Activated T-helper 2 cell treated with anti-CD3 and anti-CD28 coated beads, Interferon-gamma antibody, Interleukin-2, Interleukin-4, amounts not matched to agents 10 μg/mL and 5 μg/mL and 100 μg/mL, durations not matched to agents 14 hours and 24 hours and 36 hours (primary cell): ENCODE measurements at regions of chr6 and their contacts with region 1.

Region 1: DNA sequence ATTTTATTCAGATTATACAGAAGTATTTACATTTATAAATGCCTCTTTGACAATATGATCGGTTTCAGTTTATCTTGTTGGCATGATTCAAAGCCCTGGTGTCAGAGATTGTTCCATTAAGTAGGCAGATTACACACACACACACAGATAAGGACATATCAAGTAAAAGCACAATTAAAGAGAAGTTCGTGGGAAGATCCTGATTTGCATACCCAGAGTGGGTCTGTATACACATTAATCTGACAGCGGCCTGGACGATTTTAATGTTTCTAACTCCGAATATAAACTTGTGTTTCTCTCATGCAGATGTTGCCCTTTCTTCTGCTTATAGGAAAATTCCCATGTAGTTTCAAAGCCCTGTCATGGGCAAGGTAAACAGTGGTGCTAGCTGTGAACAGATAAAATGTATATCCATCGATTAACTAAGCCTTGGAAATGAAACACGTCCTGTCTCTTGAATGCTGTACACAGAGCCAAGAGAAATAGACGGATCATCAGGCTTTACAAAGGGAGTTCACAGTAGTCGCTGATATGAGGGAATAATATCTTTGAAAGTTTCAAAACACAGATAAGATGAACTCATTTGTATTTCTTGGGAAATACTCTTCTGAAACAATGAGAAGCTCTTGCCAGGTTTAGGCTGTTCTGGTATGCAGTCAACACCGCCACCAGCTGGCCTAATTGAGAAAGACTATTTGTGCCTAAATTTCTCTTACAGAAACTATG is 108.2 kb upstream of the GMDS start:
- DNase-seq: peak; percentile 29
- H3K4me3 Mint-ChIP-seq: no peak overlapping the region
- H3K27ac Mint-ChIP-seq: no peak overlapping the region
- H3K4me1 Mint-ChIP-seq: no peaks in the 10 kb centered on the region
- H3K27me3 Mint-ChIP-seq: peaks cover 1% of the 10 kb centered on the region

Region 2: GRCh38 chr6:1596088-1596852 is 757.3 kb before region 1 on chr6:
- intact Hi-C with region 1: loop called (anchors 2 kb)
- DNase-seq: peak; percentile 42
- H3K4me3 Mint-ChIP-seq: no peak overlapping the region
- H3K27ac Mint-ChIP-seq: no peak overlapping the region
- H3K4me1 Mint-ChIP-seq: no peaks in the 10 kb centered on the region
- H3K27me3 Mint-ChIP-seq: peaks cover 55% of the 10 kb centered on the region

Region 3: GRCh38 chr6:1604158-1605030 is 749.2 kb before region 1 on chr6:
- intact Hi-C with region 1: loop called (anchors 1 kb)
- DNase-seq: peak; percentile 40
- H3K4me3 Mint-ChIP-seq: no peak overlapping the region
- H3K27ac Mint-ChIP-seq: no peak overlapping the region
- H3K4me1 Mint-ChIP-seq: peaks cover 10% of the 10 kb centered on the region
- H3K27me3 Mint-ChIP-seq: peaks cover 82% of the 10 kb centered on the region

Region 4: DNA sequence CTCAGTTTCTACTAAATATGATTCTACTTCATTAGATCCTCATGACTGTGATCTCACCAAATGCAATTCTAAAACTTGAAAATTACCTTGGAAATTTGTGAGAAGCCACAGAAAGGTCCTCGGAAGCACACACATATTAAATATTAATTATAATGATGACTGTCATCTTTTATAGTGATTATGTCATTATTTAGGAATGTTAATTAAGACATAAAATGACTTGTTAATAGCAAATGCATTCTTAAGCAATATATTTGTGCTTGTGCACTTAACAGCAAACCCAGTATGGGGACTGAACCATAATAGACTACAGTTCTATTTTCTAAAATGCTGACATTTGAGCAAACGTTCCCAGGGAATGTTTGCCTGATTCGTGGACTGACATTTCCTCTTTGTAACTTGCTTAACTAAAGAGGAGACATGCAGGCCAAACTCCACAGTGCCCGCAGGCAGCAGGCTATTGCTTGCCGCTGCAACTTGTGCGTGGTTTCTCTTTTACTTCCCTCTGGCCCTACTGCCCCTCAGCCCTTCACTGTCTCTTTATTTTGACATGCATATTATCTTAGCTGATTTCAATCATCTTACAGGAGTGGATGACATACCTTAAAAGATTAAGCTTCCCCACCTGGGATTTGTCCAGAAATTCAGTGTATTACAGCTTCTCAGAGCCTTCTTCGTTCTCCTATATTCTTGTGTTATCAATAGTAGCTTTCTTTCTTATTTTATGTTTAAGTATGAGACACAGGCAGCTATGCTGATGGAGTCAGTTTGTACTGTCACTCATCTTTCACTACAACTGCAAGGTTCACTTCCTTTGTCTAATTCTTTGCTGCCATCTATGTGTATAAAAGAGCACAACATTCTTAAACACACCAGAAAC is 249.7 kb before region 1 on chr6:
- intact Hi-C with region 1: loop called (anchors 10 kb)
- DNase-seq: no peak
- H3K4me3 Mint-ChIP-seq: no peak overlapping the region
- H3K27ac Mint-ChIP-seq: no peak overlapping the region
- H3K4me1 Mint-ChIP-seq: peaks cover 1% of the 10 kb centered on the region
- H3K27me3 Mint-ChIP-seq: peaks cover 3% of the 10 kb centered on the region

Region 5: DNA sequence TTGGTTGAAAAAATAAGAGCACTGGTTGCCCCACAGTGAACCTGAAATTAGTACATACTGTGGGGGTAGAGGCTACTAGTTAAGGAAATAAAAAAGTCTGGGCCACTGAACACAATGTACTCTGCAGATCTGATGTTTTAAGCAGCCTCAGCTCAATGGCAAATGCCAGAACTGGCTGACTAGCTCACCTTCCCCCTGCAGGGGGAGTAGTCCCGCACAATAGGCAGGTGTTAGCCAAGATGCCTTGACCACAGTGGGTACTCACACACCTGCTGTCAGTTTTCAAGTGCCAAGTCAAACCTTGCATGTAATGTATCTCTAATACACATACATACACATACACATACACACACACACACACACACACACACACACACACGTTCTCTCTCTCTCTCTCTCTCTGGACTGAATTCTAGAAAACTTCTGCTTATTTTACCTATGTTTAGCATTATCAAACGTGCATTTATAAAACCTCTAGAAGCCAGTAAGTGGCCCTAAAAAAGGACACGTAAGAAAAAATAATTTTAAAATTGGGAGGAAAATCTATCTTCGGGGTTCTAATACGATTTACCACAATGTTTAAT is 144.3 kb before region 1 on chr6:
- intact Hi-C with region 1: loop called (anchors 2 kb)
- DNase-seq: peak; percentile 23
- H3K4me3 Mint-ChIP-seq: no peak overlapping the region
- H3K27ac Mint-ChIP-seq: no peak overlapping the region
- H3K4me1 Mint-ChIP-seq: no peaks in the 10 kb centered on the region
- H3K27me3 Mint-ChIP-seq: peaks cover 10% of the 10 kb centered on the region

Region 6: DNA sequence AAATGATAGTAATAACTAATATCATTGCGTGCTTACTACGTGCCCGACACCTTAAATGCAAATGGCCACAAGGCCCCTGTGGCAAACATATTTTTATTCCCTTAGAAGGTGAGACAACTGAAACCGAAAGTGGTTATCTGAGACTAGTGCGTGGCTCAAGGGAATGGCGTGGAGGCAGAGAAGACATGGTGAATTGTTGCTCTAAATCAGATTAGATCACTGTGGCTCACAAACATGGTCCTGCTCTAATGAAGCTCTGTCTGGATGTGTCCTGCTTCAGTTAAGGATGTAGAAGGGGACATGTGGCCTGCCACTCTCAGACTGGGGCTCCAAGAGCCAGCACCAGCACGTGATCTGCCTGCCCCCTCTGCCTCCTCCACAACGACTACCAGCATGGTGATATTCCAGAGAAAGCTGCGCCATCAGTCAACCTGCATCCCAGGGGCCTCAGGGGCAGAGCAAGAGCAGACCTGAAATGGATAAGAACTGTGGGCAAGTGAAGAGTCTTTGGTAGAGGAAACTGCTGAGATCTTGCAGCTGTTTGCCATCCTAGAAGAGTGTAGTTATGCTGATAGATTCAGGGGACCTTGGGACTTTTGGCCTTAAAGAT is 16.1 kb after region 1 on chr6:
- intact Hi-C with region 1: no loop called
- DNase-seq: no peak
- H3K4me3 Mint-ChIP-seq: no peak overlapping the region
- H3K27ac Mint-ChIP-seq: no peak overlapping the region
- H3K4me1 Mint-ChIP-seq: peaks cover 5% of the 10 kb centered on the region
- H3K27me3 Mint-ChIP-seq: no peaks in the 10 kb centered on the region

Region 7: GRCh38 chr6:2634139-2634964 is 280.8 kb after region 1 on chr6:
- intact Hi-C with region 1: loop called (anchors 10 kb)
- DNase-seq: peak; percentile 72
- H3K4me3 Mint-ChIP-seq: peak overlapping the region; percentile 58
- H3K27ac Mint-ChIP-seq: no peak overlapping the region
- H3K4me1 Mint-ChIP-seq: peaks cover 3% of the 10 kb centered on the region
- H3K27me3 Mint-ChIP-seq: peaks cover 15% of the 10 kb centered on the region